ENCODE measurements at regions of chr1 and their contacts with region 1.

Region 1: DNA sequence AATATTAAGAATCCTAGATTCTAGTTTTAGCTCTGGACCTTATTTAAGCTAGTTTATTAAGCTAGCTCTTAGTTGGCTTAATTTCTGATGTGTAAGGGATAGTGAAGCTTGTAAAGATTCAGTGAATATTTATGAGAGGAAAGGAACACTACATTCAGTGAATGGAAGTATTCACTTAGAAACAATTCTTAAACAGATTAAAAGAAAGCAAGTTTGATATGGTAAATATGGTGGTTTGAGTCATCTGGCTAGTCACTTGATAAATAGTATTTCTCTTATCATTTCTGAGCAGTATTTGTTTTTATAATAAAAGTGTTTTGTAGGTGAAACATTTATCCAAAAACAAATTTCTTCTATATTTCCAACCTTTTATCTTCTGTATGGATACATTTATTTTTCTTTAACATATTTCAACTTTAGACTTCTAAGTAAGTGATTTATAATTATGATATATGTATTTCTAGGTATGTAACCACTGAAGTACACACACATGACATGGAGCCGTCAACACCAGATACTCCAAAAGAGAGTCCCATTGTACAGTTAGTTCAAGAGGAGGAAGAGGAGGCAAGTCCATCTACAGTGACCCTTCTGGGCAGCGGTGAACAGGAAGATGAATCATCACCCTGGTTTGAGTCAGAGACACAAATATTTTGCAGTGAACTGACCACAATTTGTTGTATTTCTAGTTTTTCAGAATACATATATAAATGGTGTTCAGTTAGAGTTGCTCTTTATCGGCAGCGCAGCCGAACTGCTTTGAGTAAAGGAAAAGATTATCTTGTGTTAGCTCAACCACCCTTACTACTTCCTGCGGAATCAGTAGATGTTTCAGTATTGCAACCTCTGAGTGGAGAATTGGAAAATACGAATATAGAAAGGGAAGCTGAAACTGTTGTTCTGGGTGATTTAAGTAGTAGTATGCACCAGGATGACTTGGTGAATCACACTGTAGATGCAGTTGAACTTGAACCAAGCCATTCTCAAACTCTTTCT is 55.6 kb downstream of the SUCO start:
- DNase-seq: peak; percentile 48
- ATAC-seq: peak; percentile 95
- H3K4me3 Mint-ChIP-seq: no peak overlapping the region
- H3K27ac Mint-ChIP-seq: peak overlapping the region; percentile 28
- H3K4me1 Mint-ChIP-seq: peaks cover 25% of the 10 kb centered on the region
- H3K27me3 Mint-ChIP-seq: no peaks in the 10 kb centered on the region

Region 2: DNA sequence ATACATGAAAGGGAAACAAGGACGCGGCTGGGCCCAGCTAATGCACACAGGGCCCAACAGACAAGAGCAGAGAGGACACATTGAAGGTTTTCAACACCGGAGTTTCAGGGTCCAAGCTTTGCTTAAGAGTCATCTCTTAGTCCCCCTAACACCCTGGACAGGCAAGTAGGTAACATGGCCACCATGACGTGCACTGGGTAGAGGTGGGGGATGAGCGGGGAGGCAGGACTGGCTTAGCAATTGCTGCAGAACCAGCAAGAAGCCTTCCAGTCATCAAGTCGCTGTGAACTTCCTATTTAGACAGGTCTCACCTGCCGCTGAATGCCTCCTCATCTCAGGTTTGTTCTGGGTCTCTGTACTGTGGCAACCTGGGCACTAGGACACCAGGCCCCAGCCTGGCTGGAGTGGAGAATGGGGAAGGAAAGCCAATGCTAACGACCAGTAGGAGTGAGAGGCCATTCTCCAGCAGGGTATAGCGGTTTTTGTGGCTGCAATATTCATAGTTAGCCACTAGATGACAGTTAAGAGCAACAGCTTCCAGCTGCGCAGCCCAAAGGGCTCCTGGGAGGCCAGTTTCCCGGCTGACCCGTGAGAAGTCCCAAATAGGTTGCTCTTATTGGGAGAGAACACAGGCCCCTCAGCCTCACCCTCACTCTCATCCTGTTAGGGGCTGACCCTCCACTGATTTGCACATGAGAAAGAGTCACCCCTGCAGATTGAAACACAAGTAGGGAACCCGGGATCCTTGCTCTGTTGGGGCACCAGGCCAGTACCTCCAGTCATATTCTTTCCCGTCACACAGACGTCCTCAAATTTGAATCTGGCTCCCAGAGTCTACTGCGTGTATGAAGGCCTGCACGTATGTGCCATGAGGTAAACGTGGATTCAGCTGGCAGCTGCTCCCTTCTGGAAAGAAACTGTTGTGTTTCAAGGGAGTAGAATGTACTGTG is 138.7 kb before region 1 on chr1:
- CTCF ChIA-PET with region 1: interaction called, 3 read pairs
- POLR2A ChIA-PET with region 1: no interaction called
- intact Hi-C with region 1: loop called in 1 of 2 experiments (anchors 5 kb)
- DNase-seq: peak; percentile 57
- ATAC-seq: peak; percentile 78
- H3K4me3 Mint-ChIP-seq: no peak overlapping the region
- H3K27ac Mint-ChIP-seq: no peak overlapping the region
- H3K4me1 Mint-ChIP-seq: peaks cover 23% of the 10 kb centered on the region
- H3K27me3 Mint-ChIP-seq: no peaks in the 10 kb centered on the region

Region 3: GRCh38 chr1:172708452-172708851 is 119.9 kb after region 1 on chr1:
- CTCF ChIA-PET with region 1: interaction called, 4 read pairs
- POLR2A ChIA-PET with region 1: no interaction called
- intact Hi-C with region 1: loop called in 1 of 2 experiments (anchors 1 kb)
- DNase-seq: peak; percentile 56
- ATAC-seq: peak; percentile 86
- H3K4me3 Mint-ChIP-seq: peak overlapping the region; percentile 37
- H3K27ac Mint-ChIP-seq: peak overlapping the region; percentile 47
- H3K4me1 Mint-ChIP-seq: peaks cover 13% of the 10 kb centered on the region
- H3K27me3 Mint-ChIP-seq: peaks cover 16% of the 10 kb centered on the region